ENCODE measurements at regions of chr20 and their contacts with region 1.

Region 1: DNA sequence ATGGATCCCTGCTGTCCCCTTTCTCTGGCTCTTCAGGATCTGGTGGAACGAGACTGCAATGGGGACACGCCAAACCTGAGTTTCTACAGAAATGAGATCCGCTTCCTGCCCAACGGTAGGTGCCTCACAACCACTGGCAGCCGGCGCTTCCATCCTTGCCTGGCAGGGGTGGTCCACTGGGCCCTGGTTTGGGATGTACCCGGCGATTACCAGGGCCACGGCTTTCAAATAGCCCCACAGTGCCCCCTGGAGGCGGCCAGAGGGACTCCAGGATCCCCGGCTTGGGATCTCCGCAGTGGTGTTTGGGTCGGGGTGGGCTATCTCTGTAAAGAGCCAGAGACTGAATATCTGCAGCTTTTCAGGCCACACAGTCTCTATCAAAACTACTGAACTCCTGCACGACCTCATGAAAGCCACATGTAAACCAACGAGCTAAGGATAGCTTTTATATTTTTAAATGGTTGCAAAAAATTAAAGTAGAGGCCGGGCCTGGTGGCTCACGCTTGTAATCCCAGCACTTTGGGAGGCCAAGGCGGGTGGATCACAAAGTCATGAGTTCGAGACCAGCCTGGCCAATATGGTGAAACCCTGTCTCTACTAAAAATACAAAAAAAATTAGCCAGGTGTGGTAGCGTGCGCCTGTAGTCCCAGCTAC is 3.7 kb downstream of the OGFR start:
- DNase-seq: peak; percentile 81
- ATAC-seq: peak; percentile 50
- H3K4me3 ChIP-seq: no peak overlapping the region
- H3K4me3 Mint-ChIP-seq: peak overlapping the region; percentile 72
- H3K27ac ChIP-seq: no peak overlapping the region
- H3K27ac Mint-ChIP-seq: peak overlapping the region; percentile 86
- H3K4me1 ChIP-seq: peaks cover 17 to 38% of the 10 kb centered on the region in 2 donors
- H3K4me1 Mint-ChIP-seq: peaks cover 33% of the 10 kb centered on the region
- H3K27me3 ChIP-seq: no peaks in the 10 kb centered on the region
- H3K27me3 Mint-ChIP-seq: no peaks in the 10 kb centered on the region
- CTCF ChIP-seq: peak; percentile 93

Region 2: DNA sequence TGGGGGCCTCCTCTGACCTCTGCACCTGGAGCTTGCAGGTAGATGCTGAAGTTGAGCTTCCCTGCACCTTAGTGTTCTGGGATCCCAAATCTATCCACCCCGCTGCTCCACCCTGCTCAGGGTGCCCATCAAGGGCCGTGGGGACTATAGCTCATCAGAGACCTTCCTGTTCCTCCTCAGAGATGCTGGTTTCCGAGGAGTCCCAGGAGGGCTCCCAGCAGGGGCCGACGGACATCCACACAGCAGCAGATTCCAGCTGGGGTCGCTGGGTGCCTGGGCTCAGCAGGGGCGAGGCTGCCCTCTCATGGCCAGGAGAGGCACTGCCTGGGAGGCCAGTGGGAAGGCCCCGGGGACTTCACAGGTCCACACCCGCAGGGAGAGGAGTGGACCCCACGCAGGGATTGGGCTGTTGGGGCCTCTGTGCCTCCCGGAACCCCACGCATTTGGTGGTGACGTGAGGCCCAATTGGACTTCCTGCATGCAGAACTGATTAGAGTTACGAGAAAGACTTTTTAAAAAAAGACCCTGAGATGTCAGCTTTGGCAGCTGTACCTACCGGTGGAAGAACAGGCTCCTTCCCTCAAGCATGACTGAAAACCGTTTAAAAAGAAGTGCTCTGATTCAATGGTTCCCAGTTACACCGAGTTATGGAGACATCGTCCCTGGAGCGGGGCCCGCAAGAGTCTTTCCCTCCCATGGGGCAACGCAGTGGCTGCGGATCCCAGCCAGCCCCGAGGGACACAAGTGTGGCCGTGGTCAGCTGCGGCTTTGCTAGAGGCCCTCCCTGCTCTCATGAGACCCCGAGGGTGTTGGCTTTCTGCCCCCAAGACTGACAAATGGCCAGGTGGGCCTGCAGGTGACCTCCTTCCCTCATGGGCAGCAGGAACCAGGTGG is 191.4 kb before region 1 on chr20:
- CTCF ChIA-PET with region 1: interaction called, 15 read pairs
- POLR2A ChIA-PET with region 1: no interaction called
- intact Hi-C with region 1: loop called (anchors 5 kb)
- DNase-seq: peak; percentile 81
- ATAC-seq: peak; percentile 71
- H3K4me3 ChIP-seq: no peak overlapping the region
- H3K4me3 Mint-ChIP-seq: peak overlapping the region; percentile 83
- H3K27ac ChIP-seq: peak overlapping the region; percentile 54 to 73
- H3K27ac Mint-ChIP-seq: peak overlapping the region; percentile 94
- H3K4me1 ChIP-seq: peaks cover 31 to 33% of the 10 kb centered on the region in 2 donors
- H3K4me1 Mint-ChIP-seq: peaks cover 41% of the 10 kb centered on the region
- H3K27me3 ChIP-seq: no peaks in the 10 kb centered on the region
- H3K27me3 Mint-ChIP-seq: no peaks in the 10 kb centered on the region
- CTCF ChIP-seq: peak; percentile 92

Region 3: GRCh38 chr20:62642040-62642665 is 166.2 kb before region 1 on chr20 and contains the start of gene SLCO4A1:
- CTCF ChIA-PET with region 1: interaction called, 11 read pairs
- POLR2A ChIA-PET with region 1: no interaction called
- intact Hi-C with region 1: loop called (anchors 2 kb)
- DNase-seq: peak; percentile 90
- ATAC-seq: peak; percentile 89
- H3K4me3 ChIP-seq: peak within 1 kb of the TSS; percentile 9 to 77 (median 65)
- H3K4me3 Mint-ChIP-seq: peak within 1 kb of the TSS; percentile 89
- H3K27ac ChIP-seq: no peak within 1 kb of the TSS
- H3K27ac Mint-ChIP-seq: peak within 1 kb of the TSS; percentile 88
- H3K4me1 ChIP-seq: peaks cover 43 to 53% of the 10 kb centered on the region in 2 donors
- H3K4me1 Mint-ChIP-seq: peaks cover 43% of the 10 kb centered on the region
- H3K27me3 ChIP-seq: peaks cover 0 to 3% (median 0%) of the 10 kb centered on the region in 4 experiments
- H3K27me3 Mint-ChIP-seq: no peaks in the 10 kb centered on the region
- CTCF ChIP-seq: no peak
- total RNA-seq, gene SLCO4A1: 79.2 and 79.5 TPM in 2 replicates

Region 4: GRCh38 chr20:62822788-62823651 is 14.7 kb after region 1 on chr20:
- CTCF ChIA-PET with region 1: interaction called, 16 read pairs
- POLR2A ChIA-PET with region 1: no interaction called
- intact Hi-C with region 1: no loop called
- DNase-seq: peak; percentile 59
- ATAC-seq: peak; percentile 15
- H3K4me3 ChIP-seq: no peak overlapping the region
- H3K4me3 Mint-ChIP-seq: peak overlapping the region; percentile 56
- H3K27ac ChIP-seq: no peak overlapping the region
- H3K27ac Mint-ChIP-seq: peak overlapping the region; percentile 56
- H3K4me1 ChIP-seq: peaks cover 23 to 28% of the 10 kb centered on the region in 2 donors
- H3K4me1 Mint-ChIP-seq: peaks cover 16% of the 10 kb centered on the region
- H3K27me3 ChIP-seq: peaks cover 0 to 24% (median 14%) of the 10 kb centered on the region in 4 experiments
- H3K27me3 Mint-ChIP-seq: no peaks in the 10 kb centered on the region
- CTCF ChIP-seq: peak; percentile 49

Region 5: GRCh38 chr20:63056236-63056948 is 248.1 kb after region 1 on chr20:
- CTCF ChIA-PET with region 1: no interaction called
- POLR2A ChIA-PET with region 1: no interaction called
- intact Hi-C with region 1: no loop called
- DNase-seq: peak; percentile 63
- ATAC-seq: peak; percentile 63
- H3K4me3 ChIP-seq: no peak overlapping the region
- H3K4me3 Mint-ChIP-seq: no peak overlapping the region
- H3K27ac ChIP-seq: no peak overlapping the region
- H3K27ac Mint-ChIP-seq: no peak overlapping the region
- H3K4me1 ChIP-seq: peaks cover 0 to 7% of the 10 kb centered on the region in 2 donors
- H3K4me1 Mint-ChIP-seq: no peaks in the 10 kb centered on the region
- H3K27me3 ChIP-seq: peaks cover 0 to 39% (median 3%) of the 10 kb centered on the region in 4 experiments
- H3K27me3 Mint-ChIP-seq: peaks cover 13% of the 10 kb centered on the region
- CTCF ChIP-seq: peak; percentile 88

Region 6: GRCh38 chr20:63272584-63273579 is 464.5 kb after region 1 on chr20 and contains the start of gene ARFGAP1:
- CTCF ChIA-PET with region 1: no interaction called
- POLR2A ChIA-PET with region 1: no interaction called
- intact Hi-C with region 1: no loop called
- DNase-seq: peak; percentile 92
- ATAC-seq: peak; percentile 96
- H3K4me3 ChIP-seq: peak within 1 kb of the TSS; percentile 55 to 80 (median 69)
- H3K4me3 Mint-ChIP-seq: peak within 1 kb of the TSS; percentile 92
- H3K27ac ChIP-seq: peak within 1 kb of the TSS in 1 of 2 donors; percentile 63
- H3K27ac Mint-ChIP-seq: peak within 1 kb of the TSS; percentile 84
- H3K4me1 ChIP-seq: peaks cover 13 to 16% of the 10 kb centered on the region in 2 donors
- H3K4me1 Mint-ChIP-seq: peaks cover 27% of the 10 kb centered on the region
- H3K27me3 ChIP-seq: no peaks in the 10 kb centered on the region
- H3K27me3 Mint-ChIP-seq: no peaks in the 10 kb centered on the region
- CTCF ChIP-seq: no peak
- total RNA-seq, gene ARFGAP1: 99.4 and 107 TPM in 2 replicates